Psoas muscle (tissue), 8 donors: ENCODE measurements at regions of chr9 and their contacts with region 1.

Region 1: DNA sequence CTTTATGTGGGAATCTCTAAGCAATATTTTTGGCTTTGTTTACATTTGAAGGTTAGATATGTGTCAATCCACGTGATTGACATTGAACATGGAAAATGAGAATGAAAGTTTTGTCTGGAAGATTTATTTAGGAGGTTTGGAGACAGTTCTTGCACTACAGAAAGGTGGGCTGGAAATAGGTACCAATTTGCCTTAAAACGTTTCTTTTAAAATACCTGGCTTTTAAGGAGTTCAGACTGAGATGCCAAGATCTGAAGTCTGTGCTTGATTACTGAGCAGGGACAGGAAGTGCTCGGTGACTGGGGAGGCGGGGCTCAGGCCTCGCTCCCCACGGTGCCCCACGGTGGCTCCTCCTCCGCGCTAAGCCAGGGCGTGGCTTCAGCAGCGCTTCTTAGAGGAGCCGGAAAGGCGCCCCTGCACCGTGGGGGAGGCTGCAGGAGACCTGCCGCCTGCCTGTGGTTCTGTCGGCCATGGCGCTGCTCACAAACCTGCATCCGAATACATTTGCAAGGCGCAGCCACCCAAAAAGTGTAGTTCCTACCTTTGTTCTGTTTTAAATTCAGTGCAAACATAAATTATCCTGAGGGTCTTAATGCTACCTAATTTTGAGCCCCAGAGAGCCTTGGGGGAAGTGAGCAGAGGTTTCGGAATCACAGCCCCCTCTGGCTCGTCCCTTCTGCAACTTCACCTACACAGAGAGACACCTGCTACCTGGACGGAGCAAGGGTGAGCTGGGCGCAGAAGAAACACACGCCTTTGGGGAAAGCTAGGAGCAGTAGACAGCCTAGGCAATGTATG is 49.2 kb downstream of the USP20 start:
- DNase-seq: peak; percentile 89 to 92
- ATAC-seq: peak; percentile 69 to 84 (median 74)
- H3K4me3 ChIP-seq: peak overlapping the region; percentile 55
- H3K27ac ChIP-seq: peak overlapping the region; percentile 66
- H3K4me1 ChIP-seq: peaks cover 18% of the 10 kb centered on the region
- H3K27me3 ChIP-seq: no peaks in the 10 kb centered on the region
- CTCF ChIP-seq: no peak

Region 2: GRCh38 chr9:129656795-129657390 is 227.5 kb before region 1 on chr9:
- intact Hi-C with region 1: no loop called
- DNase-seq: no peak
- ATAC-seq: no peak
- H3K4me3 ChIP-seq: no peak overlapping the region
- H3K27ac ChIP-seq: no peak overlapping the region
- H3K4me1 ChIP-seq: no peaks in the 10 kb centered on the region
- H3K27me3 ChIP-seq: peaks cover 0 to 10% (median 0%) of the 10 kb centered on the region in 3 donors
- CTCF ChIP-seq: no peak

Region 3: GRCh38 chr9:129910628-129911567 is 26.5 kb after region 1 on chr9:
- intact Hi-C with region 1: no loop called
- DNase-seq: no peak
- ATAC-seq: no peak
- H3K4me3 ChIP-seq: no peak overlapping the region
- H3K27ac ChIP-seq: no peak overlapping the region
- H3K4me1 ChIP-seq: no peaks in the 10 kb centered on the region
- H3K27me3 ChIP-seq: no peaks in the 10 kb centered on the region
- CTCF ChIP-seq: no peak

Region 4: GRCh38 chr9:129938291-129938979 is 54.0 kb after region 1 on chr9:
- intact Hi-C with region 1: no loop called
- DNase-seq: no peak
- ATAC-seq: no peak
- H3K4me3 ChIP-seq: no peak overlapping the region
- H3K27ac ChIP-seq: no peak overlapping the region
- H3K4me1 ChIP-seq: peaks cover 21% of the 10 kb centered on the region
- H3K27me3 ChIP-seq: no peaks in the 10 kb centered on the region
- CTCF ChIP-seq: no peak

Region 5: GRCh38 chr9:130042833-130043653 is 158.6 kb after region 1 on chr9 and contains the start of gene FNBP1:
- intact Hi-C with region 1: loop called in 1 of 2 experiments (anchors 2 kb)
- DNase-seq: peak; percentile 80 to 89
- ATAC-seq: peak; percentile 94 to 96 (median 94)
- H3K4me3 ChIP-seq: peak within 1 kb of the TSS; percentile 98
- H3K27ac ChIP-seq: peak within 1 kb of the TSS; percentile 86
- H3K4me1 ChIP-seq: peaks cover 10% of the 10 kb centered on the region
- H3K27me3 ChIP-seq: no peaks in the 10 kb centered on the region
- CTCF ChIP-seq: no peak
- total RNA-seq, gene FNBP1: 23.7 to 30.1 (median 27.5) TPM

Region 6: DNA sequence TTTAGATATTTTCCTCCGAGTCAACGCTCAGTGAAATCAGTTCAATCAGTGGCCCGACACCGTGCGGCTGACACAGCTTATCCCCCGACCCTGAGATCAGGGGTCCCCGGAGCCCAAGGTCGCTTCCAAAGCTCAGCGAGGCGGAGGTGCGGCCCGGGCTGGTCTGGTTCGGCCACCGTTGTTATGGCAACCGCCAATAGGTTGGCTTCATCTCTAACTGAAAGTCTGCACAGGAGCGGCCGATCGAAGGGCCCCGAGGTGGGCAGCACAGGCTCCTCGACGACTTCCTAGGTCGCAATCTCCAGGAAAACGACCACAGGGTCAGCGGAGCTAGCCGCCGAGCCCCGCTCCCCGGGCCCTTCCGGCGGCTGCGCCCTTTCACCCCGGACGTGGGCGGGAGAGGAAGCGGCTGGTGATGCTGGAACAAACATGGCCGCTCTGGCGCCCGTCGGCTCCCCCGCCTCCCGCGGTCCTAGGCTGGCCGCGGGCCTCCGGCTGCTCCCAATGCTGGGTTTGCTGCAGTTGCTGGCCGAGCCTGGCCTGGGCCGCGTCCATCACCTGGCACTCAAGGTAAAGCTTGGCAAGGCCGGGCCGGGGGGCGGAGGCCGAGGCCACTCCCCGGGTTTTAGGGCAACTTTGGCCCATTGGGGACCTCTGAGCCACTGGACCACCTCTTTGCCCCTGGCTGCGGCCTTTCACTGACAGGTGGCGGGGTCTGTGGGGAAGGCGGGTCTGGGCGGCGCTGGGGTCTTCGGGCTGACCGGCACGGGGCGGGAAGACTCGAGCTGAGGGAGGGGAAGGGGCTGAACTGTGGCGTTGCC is 169.3 kb after region 1 on chr9 and contains the start of gene GPR107:
- intact Hi-C with region 1: loop called in 1 of 2 experiments (anchors 5 kb)
- DNase-seq: peak; percentile 85 to 90
- ATAC-seq: peak; percentile 97 to 99 (median 98)
- H3K4me3 ChIP-seq: peak within 1 kb of the TSS; percentile 97
- H3K27ac ChIP-seq: peak within 1 kb of the TSS; percentile 92
- H3K4me1 ChIP-seq: peaks cover 27% of the 10 kb centered on the region
- H3K27me3 ChIP-seq: no peaks in the 10 kb centered on the region
- CTCF ChIP-seq: no peak
- total RNA-seq, gene GPR107: 18.2 to 25.9 (median 22.8) TPM

Region 7: DNA sequence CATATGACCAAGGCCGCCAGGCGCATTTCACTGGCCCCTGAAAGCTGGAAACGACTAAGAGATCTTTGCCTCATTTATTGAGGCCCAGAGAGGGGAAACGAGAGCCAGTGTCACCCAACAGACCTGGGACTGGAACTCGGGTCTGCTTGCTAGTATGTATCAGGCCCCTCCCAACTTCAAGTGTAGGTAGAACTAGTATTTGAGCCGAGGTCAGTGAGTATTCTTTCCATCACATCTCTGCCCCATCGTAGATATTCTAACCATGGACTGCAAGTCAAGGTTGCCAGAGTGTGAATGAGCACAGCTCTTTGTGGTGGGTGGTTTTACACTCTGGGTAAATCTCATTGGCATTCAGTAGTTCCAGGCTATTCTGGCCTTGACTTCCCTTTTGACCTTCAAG is 211.5 kb after region 1 on chr9:
- intact Hi-C with region 1: loop called (anchors 2 to 5 kb)
- DNase-seq: no peak
- ATAC-seq: no peak
- H3K4me3 ChIP-seq: no peak overlapping the region
- H3K27ac ChIP-seq: no peak overlapping the region
- H3K4me1 ChIP-seq: no peaks in the 10 kb centered on the region
- H3K27me3 ChIP-seq: no peaks in the 10 kb centered on the region
- CTCF ChIP-seq: no peak

Region 8: DNA sequence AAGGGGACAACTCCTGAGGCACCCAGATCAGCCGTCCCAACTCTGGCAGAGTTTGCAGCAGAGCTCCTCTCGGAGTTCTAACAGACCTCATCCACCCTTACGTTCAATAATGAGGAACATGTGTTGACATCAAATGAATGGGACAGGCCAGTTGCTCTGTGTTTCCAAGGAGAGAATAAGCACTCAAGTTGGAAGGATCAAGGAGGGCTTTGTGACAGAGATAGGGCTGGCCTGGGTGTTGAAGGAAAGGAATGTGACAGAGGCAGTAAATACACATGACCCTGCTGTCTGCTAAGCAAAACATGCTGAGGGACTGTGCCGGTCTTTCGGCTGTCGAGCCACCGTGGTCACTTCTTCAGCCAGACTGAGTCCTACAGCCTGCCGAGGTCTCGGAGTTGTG is 217.5 kb after region 1 on chr9:
- intact Hi-C with region 1: loop called (anchors 2 to 5 kb)
- DNase-seq: no peak
- ATAC-seq: peak in 1 of 4 donors; percentile 68
- H3K4me3 ChIP-seq: no peak overlapping the region
- H3K27ac ChIP-seq: no peak overlapping the region
- H3K4me1 ChIP-seq: no peaks in the 10 kb centered on the region
- H3K27me3 ChIP-seq: no peaks in the 10 kb centered on the region
- CTCF ChIP-seq: no peak

Region 9: DNA sequence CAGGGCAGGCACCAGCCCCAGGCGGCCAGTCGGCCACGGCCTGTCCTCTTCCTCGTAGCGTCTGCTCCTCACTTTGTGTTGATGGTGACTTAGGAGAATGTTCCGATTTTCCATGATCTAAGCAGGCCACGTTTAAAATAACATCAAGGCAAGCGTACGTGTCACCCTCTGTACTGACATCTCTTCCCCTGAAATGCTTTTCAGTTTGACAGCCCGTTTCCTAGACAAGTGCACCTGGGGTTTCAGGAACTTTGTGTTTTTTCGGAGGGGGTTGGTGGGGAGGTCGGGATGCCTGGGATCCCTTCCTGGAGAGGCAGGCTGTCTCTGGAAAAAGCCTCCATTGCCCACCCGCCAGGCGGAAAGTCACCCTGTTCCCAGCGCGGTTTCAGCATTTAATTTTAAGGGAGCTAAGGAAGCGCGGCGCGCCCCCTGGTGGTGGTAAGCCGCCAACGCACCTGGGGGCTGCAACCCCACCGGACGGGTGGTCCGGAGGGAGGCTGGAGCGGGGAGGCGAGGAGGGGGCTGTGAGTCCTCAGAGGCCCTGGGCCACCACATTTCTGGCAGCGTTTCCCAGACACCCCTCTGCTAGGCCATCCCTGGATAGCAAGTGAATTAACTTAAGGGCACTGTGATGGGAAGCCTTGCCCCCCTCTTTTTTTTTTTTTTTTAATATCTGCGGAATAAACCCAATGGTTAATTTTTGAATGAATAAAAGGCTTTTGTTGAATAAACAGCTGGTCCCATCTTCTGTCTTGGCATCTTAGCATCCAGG is 351.7 kb after region 1 on chr9:
- intact Hi-C with region 1: loop called (anchors 5 to 10 kb)
- DNase-seq: peak; percentile 67 to 82
- ATAC-seq: peak; percentile 59 to 85 (median 66)
- H3K4me3 ChIP-seq: peak overlapping the region; percentile 4
- H3K27ac ChIP-seq: no peak overlapping the region
- H3K4me1 ChIP-seq: no peaks in the 10 kb centered on the region
- H3K27me3 ChIP-seq: no peaks in the 10 kb centered on the region
- CTCF ChIP-seq: peak; percentile 99

Region 10: GRCh38 chr9:130542457-130543228 is 658.2 kb after region 1 on chr9:
- intact Hi-C with region 1: no loop called
- DNase-seq: no peak
- ATAC-seq: no peak
- H3K4me3 ChIP-seq: no peak overlapping the region
- H3K27ac ChIP-seq: no peak overlapping the region
- H3K4me1 ChIP-seq: no peaks in the 10 kb centered on the region
- H3K27me3 ChIP-seq: peaks cover 0 to 36% (median 11%) of the 10 kb centered on the region in 3 donors
- CTCF ChIP-seq: no peak